HepG2 (cell line): ENCODE measurements at regions of chr3 and their contacts with region 1.

Region 1: DNA sequence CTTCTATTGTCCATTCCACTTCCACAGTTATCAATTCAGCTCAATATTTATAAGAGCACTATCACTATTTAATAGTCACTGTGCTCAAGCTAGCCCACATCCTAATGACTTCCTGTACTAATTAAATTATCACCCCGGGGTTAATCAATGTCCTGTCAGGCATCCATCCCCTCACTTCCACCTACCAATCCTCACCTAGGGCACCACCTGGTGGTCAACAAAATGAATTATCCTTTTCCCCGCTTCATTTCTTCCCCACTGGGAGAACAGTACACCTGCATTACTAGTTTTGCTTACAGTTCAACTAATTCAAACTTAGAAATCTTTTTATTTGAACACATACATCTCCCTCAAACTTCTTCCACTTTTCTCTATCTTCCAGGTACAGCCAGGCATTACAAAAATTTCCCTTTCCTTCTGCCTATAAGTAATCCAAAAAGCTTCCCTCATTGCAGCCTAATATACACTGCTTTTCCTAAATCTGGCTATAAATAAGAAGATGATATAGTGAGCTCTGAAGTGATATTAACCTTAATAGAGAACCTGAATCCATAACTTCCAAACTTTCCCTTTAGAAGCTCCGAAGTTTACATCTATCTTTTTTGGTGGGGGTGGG is 68.5 kb downstream of the TMCC1 start:
- DNase-seq: peak; percentile 62
- ATAC-seq: peak; percentile 75
- H3K4me3 ChIP-seq: no peak overlapping the region
- H3K27ac ChIP-seq: no peak overlapping the region
- H3K4me1 ChIP-seq: peaks cover 20% of the 10 kb centered on the region
- H3K27me3 ChIP-seq: no peaks in the 10 kb centered on the region
- CTCF ChIP-seq: peak; percentile 83
- EP300 ChIP-seq: no peak
- POLR2A ChIP-seq: no peak
- RAD21 ChIP-seq: peak; percentile 72

Region 2: GRCh38 chr3:129383292-129383860 is 441.7 kb before region 1 on chr3:
- CTCF ChIA-PET with region 1: no interaction called
- POLR2A ChIA-PET with region 1: no interaction called
- in situ Hi-C with region 1: no loop called
- intact Hi-C with region 1: loop called (anchors 5 kb)
- DNase-seq: peak; percentile 74
- ATAC-seq: peak; percentile 94
- H3K4me3 ChIP-seq: no peak overlapping the region
- H3K27ac ChIP-seq: no peak overlapping the region
- H3K4me1 ChIP-seq: peaks cover 28% of the 10 kb centered on the region
- H3K27me3 ChIP-seq: no peaks in the 10 kb centered on the region
- CTCF ChIP-seq: peak; percentile 93
- EP300 ChIP-seq: no peak
- POLR2A ChIP-seq: no peak
- RAD21 ChIP-seq: peak; percentile 95

Region 3: GRCh38 chr3:129650256-129650872 is 174.7 kb before region 1 on chr3:
- CTCF ChIA-PET with region 1: interaction called, 44 read pairs
- POLR2A ChIA-PET with region 1: no interaction called
- in situ Hi-C with region 1: loop called (anchors 5 kb)
- intact Hi-C with region 1: loop called (anchors 1 kb)
- DNase-seq: peak; percentile 48
- ATAC-seq: no peak
- H3K4me3 ChIP-seq: no peak overlapping the region; a peak in 1 of 6 replicates
- H3K27ac ChIP-seq: no peak overlapping the region
- H3K4me1 ChIP-seq: peaks cover 50% of the 10 kb centered on the region
- H3K27me3 ChIP-seq: no peaks in the 10 kb centered on the region; a peak in 1 of 5 replicates
- CTCF ChIP-seq: peak; percentile 56
- EP300 ChIP-seq: no peak
- POLR2A ChIP-seq: peak in 1 of 2 experiments; percentile 22; a peak in 1 of 4 replicates
- RAD21 ChIP-seq: peak; percentile 37; the same call in 1 of the 2 replicates